ENCODE measurements at regions of chr7 and their contacts with region 1.

Region 1: GRCh38 chr7:77727936-77728701 is 31.9 kb downstream of the RSBN1L start:
- H3K4me3 Mint-ChIP-seq: no peak overlapping the region
- H3K27ac Mint-ChIP-seq: peak overlapping the region; percentile 62
- H3K4me1 Mint-ChIP-seq: peaks cover 62% of the 10 kb centered on the region
- H3K27me3 Mint-ChIP-seq: no peaks in the 10 kb centered on the region

Region 2: DNA sequence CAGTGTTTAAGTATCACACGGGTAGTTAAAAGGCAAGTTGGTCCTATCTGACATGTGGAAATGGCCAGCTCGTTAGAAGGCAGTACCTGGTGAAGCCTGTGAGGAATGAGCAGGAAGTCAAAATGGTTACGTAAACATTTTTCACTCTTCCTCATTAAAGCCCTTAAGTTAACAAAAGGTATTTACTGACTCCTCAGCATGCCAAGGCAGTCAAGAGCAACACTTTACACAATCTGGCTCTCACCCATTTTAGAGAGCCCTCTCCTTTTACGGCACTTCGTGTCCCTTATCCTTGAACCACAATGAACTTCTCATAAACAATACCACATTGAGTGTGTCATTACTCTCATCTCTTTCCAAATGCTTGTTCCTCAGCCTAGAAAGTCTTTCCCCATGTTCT is 42.9 kb before region 1 on chr7:
- intact Hi-C with region 1: loop called (anchors 5 kb)
- H3K4me3 Mint-ChIP-seq: no peak overlapping the region
- H3K27ac Mint-ChIP-seq: no peak overlapping the region
- H3K4me1 Mint-ChIP-seq: peaks cover 15% of the 10 kb centered on the region
- H3K27me3 Mint-ChIP-seq: no peaks in the 10 kb centered on the region

Region 3: GRCh38 chr7:77714195-77714594 is 13.9 kb before region 1 on chr7:
- intact Hi-C with region 1: no loop called
- H3K4me3 Mint-ChIP-seq: no peak overlapping the region
- H3K27ac Mint-ChIP-seq: no peak overlapping the region
- H3K4me1 Mint-ChIP-seq: peaks cover 22% of the 10 kb centered on the region
- H3K27me3 Mint-ChIP-seq: no peaks in the 10 kb centered on the region

Measured in dendritic cell treated with granulocyte-macrophage colony-stimulating factor and Interleukin-4, amounts not matched to agents 40 ng/mL and 50 ng/mL, for 4 days (primary cell).